Aorta (tissue), 5 donors: ENCODE measurements at regions of chr11 and their contacts with region 1.

Region 1: GRCh38 chr11:80650966-80651365 is 1210.1 kb upstream of the TENM4 start:
- DNase-seq: no peak
- ATAC-seq: no peak
- H3K4me3 ChIP-seq: no peak overlapping the region
- H3K27ac ChIP-seq: no peak overlapping the region
- H3K4me1 ChIP-seq: no peaks in the 10 kb centered on the region
- H3K27me3 ChIP-seq: no peaks in the 10 kb centered on the region

Region 2: DNA sequence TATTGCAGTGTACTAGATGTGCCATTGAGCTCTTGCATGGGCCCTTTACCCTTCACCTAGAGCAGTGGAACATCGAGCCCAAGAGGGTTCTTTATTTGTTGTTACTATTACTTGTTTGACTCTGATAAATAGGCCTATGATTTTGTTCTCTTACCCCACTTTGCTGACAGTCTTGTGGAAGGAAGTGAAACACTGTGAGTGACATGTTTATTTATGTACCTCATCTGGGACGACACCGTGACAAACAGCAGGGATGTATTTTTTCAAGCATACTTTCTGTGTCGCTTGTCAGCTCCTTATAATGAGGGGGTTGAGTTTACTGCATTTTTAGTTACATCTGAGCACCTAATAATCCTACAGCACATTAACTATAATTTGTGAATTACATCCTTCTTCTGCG is 199.9 kb before region 1 on chr11:
- intact Hi-C with region 1: loop called in 1 of 2 experiments (anchors 10 kb)
- DNase-seq: no peak
- ATAC-seq: no peak
- H3K4me3 ChIP-seq: no peak overlapping the region
- H3K27ac ChIP-seq: no peak overlapping the region
- H3K4me1 ChIP-seq: no peaks in the 10 kb centered on the region
- H3K27me3 ChIP-seq: no peaks in the 10 kb centered on the region

Region 3: DNA sequence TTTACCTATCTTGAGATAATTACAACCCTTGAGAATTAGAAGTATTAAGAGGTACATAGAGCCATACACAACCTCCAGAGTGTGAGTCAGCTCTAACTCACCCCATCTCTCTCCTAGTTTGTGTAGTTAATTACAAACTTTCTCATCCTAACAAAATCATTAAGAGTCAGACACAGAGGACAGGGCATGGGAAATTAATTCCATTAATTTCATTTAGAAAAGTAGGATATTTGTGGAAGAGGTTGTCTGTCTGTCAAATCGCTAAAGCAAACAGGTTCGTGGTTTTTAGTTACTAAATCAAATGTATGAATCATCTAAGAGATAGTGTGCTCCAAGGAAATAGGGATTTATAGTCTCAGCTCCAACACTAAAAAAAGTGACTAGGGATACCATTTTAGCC is 51.3 kb after region 1 on chr11:
- intact Hi-C with region 1: no loop called
- DNase-seq: no peak
- ATAC-seq: no peak
- H3K4me3 ChIP-seq: no peak overlapping the region
- H3K27ac ChIP-seq: no peak overlapping the region
- H3K4me1 ChIP-seq: no peaks in the 10 kb centered on the region
- H3K27me3 ChIP-seq: no peaks in the 10 kb centered on the region